Activated CD4-positive, alpha-beta memory T cell treated with anti-CD3 and anti-CD28 coated beads for 36 hours (primary cell): ENCODE measurements at regions of chr3 and their contacts with region 1.

Region 1: DNA sequence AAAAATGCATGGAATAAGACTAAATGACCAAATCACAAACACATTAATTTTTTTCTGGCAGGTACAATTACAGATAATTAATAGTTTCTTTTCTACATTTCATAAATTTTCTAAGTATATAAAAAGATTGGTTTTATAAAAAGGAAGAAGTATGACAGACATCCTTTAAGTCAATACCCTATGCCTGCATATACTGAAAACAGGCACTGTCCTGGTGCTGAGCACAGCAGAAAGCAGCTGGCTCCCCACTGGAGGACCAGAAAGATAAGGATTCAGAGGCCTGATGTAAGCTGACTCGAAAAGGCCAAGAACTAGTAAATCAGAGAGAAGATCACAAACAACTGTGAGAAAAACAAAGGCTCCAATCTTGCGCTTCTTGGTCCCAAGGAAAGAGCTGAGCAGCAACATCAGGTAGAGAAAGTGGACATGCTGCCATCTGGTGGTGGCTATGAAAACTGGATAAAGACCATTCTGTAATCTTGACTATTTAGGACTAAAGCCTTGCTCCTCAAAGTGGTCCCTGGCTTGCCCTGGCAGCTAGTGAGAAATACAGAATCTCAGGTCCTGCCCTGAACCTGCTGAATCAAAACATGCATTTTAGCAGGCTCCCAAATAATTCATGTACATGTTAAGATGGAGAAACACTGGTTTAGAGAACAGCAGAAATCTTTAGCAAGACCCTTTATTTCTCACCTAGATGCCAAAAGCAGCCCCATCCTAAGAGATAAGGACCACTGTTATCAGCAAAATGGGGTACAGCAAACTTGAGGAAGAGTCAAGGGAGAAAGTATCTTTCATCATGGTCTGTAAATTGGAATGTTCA is 76.0 kb downstream of the TRANK1 start:
- DNase-seq: peak; percentile 60
- H3K4me3 Mint-ChIP-seq: no peak overlapping the region
- H3K27ac Mint-ChIP-seq: no peak overlapping the region
- H3K4me1 Mint-ChIP-seq: peaks cover 23% of the 10 kb centered on the region
- H3K27me3 Mint-ChIP-seq: no peaks in the 10 kb centered on the region

Region 2: GRCh38 chr3:36729204-36730056 is 139.4 kb before region 1 on chr3:
- CTCF ChIA-PET with region 1: interaction called, 15 read pairs
- POLR2A ChIA-PET with region 1: no interaction called
- intact Hi-C with region 1: loop called (anchors 1 kb)
- DNase-seq: no peak
- H3K4me3 Mint-ChIP-seq: no peak overlapping the region
- H3K27ac Mint-ChIP-seq: no peak overlapping the region
- H3K4me1 Mint-ChIP-seq: no peaks in the 10 kb centered on the region
- H3K27me3 Mint-ChIP-seq: peaks cover 6% of the 10 kb centered on the region

Region 3: GRCh38 chr3:36734742-36735141 is 134.1 kb before region 1 on chr3:
- CTCF ChIA-PET with region 1: interaction called, 15 read pairs
- POLR2A ChIA-PET with region 1: no interaction called
- intact Hi-C with region 1: loop called (anchors 1 kb)
- DNase-seq: no peak
- H3K4me3 Mint-ChIP-seq: no peak overlapping the region
- H3K27ac Mint-ChIP-seq: no peak overlapping the region
- H3K4me1 Mint-ChIP-seq: no peaks in the 10 kb centered on the region
- H3K27me3 Mint-ChIP-seq: no peaks in the 10 kb centered on the region

Region 4: DNA sequence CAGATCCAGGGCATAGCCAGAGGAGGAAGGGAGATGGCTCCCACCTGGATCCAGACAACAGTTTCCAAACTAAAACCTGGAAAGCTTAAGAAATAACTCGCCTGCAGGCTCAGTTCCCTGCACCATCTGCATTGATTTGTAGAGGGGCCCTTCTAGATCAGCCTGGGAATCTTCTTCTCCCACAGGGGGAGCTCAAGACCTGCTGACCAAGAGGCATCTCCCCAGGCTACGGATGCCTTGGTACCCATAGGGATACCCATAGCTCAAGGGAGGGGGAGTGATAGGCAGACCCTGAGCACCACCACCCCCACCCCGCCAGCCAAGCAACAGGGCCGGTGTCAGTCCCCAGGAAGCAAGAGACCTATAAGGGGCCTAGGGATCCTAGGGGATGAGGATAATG is 76.5 kb before region 1 on chr3:
- CTCF ChIA-PET with region 1: interaction called, 11 read pairs
- POLR2A ChIA-PET with region 1: no interaction called
- intact Hi-C with region 1: loop called (anchors 1 kb)
- DNase-seq: peak; percentile 33
- H3K4me3 Mint-ChIP-seq: no peak overlapping the region
- H3K27ac Mint-ChIP-seq: no peak overlapping the region
- H3K4me1 Mint-ChIP-seq: no peaks in the 10 kb centered on the region
- H3K27me3 Mint-ChIP-seq: no peaks in the 10 kb centered on the region

Region 5: GRCh38 chr3:36852071-36852470 is 16.8 kb before region 1 on chr3:
- CTCF ChIA-PET with region 1: interaction called, 29 read pairs
- POLR2A ChIA-PET with region 1: no interaction called
- intact Hi-C with region 1: no loop called
- DNase-seq: no peak
- H3K4me3 Mint-ChIP-seq: no peak overlapping the region
- H3K27ac Mint-ChIP-seq: no peak overlapping the region
- H3K4me1 Mint-ChIP-seq: no peaks in the 10 kb centered on the region
- H3K27me3 Mint-ChIP-seq: no peaks in the 10 kb centered on the region

Region 6: DNA sequence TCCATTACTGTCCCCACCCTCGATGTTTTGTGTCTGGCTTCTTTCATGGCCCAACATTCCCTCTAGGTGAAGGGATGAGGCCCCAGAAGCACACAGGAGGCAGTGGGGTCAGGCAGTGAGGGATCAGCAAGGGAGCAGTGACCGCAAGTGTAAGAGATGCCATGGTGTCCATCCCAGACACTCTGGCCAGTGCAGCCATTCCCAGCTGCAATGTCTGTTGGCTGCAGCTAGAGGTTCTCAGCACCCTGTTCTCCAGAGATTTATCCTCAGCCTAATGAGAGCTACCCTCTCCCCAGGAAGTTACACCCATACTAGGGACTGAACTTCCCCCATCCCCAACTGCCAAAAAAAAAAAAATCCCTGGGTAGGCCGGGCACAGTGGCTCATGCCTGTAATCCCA is 35.8 kb after region 1 on chr3:
- CTCF ChIA-PET with region 1: interaction called, 15 read pairs
- POLR2A ChIA-PET with region 1: no interaction called
- intact Hi-C with region 1: no loop called
- DNase-seq: no peak
- H3K4me3 Mint-ChIP-seq: no peak overlapping the region
- H3K27ac Mint-ChIP-seq: no peak overlapping the region
- H3K4me1 Mint-ChIP-seq: peaks cover 78% of the 10 kb centered on the region
- H3K27me3 Mint-ChIP-seq: no peaks in the 10 kb centered on the region